Right cardiac atrium (tissue), 5 donors: ENCODE measurements at regions of chr12 and their contacts with region 1.

Region 1: GRCh38 chr12:81450920-81451739 is 308.0 kb downstream of the PPFIA2 start:
- DNase-seq: peak in 2 of 3 donors; percentile 31 to 43
- ATAC-seq: peak; percentile 70 to 78
- H3K4me3 ChIP-seq: no peak overlapping the region
- H3K27ac ChIP-seq: no peak overlapping the region
- H3K4me1 ChIP-seq: no peaks in the 10 kb centered on the region
- H3K27me3 ChIP-seq: no peaks in the 10 kb centered on the region

Region 2: DNA sequence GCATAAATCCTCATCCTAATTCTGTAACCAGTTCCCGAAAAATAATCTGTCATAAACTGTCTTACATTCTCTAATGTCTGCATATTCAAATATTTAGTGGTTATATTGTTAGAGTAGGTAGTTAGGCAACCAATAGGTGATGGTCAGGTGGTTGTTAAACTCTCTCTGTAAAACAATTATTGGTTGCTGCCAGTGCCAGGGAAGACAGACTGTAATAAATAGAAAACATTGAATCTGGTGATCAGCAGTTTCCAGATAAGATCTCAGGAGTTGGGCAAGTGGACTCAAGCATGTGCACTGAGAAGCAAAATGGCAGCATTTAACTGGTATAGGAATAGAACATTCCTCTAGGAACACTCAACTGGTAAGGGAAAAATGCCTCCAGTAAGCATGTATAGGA is 47.8 kb before region 1 on chr12:
- intact Hi-C with region 1: no loop called
- DNase-seq: no peak
- ATAC-seq: no peak
- H3K4me3 ChIP-seq: no peak overlapping the region
- H3K27ac ChIP-seq: no peak overlapping the region
- H3K4me1 ChIP-seq: no peaks in the 10 kb centered on the region
- H3K27me3 ChIP-seq: no peaks in the 10 kb centered on the region

Region 3: GRCh38 chr12:81627336-81628189 is 176.4 kb after region 1 on chr12:
- intact Hi-C with region 1: loop called (anchors 5 kb)
- DNase-seq: no peak
- ATAC-seq: no peak
- H3K4me3 ChIP-seq: no peak overlapping the region
- H3K27ac ChIP-seq: no peak overlapping the region
- H3K4me1 ChIP-seq: no peaks in the 10 kb centered on the region
- H3K27me3 ChIP-seq: no peaks in the 10 kb centered on the region

Region 4: GRCh38 chr12:81633127-81633526 is 182.0 kb after region 1 on chr12:
- intact Hi-C with region 1: loop called (anchors 5 kb)
- DNase-seq: no peak
- ATAC-seq: no peak
- H3K4me3 ChIP-seq: no peak overlapping the region
- H3K27ac ChIP-seq: no peak overlapping the region
- H3K4me1 ChIP-seq: no peaks in the 10 kb centered on the region
- H3K27me3 ChIP-seq: no peaks in the 10 kb centered on the region